CD14-positive monocyte (primary cell): ENCODE measurements at regions of chr2 and their contacts with region 1.

Region 1: DNA sequence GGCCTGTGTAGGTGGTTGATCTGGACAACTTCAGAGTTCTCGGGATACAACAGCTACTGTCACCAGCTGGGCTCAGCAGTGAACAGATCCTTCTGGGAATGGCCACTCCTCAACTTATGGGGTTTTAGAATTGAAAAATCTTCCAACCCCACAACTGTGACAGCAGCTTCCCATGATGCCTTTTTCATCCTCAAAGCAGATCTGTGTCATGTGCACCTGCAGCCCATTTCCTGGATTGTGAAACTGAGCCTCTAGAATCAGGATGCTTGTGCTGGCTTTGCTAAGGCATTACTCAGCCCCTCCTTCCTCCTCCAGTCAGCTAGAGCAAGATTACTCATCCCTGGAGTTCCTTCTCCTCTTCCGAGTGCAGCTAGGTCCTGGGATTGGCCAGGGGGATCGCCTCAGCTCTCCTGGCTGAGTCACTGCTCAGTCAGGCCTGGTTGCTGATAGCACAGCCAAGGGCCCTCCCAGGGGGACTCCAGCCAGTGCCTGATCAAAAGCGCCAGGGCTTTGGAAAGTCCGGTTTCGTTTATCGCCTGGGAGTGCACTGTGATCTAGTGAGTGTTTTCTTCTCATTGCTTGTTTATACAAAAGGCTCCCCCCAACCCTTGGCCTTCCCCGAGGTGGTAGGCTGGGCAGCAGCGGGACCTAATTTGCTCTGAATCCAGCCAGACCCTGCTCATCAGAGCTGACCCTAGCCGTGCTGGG is 2.4 kb upstream of the LPIN1 start:
- DNase-seq: peak; percentile 96 to 100 (median 99)
- H3K4me3 ChIP-seq: peak overlapping the region in 1 of 3 experiments; percentile 28
- H3K4me3 Mint-ChIP-seq: peak overlapping the region; percentile 54 to 68
- H3K27ac ChIP-seq: peak overlapping the region; percentile 16 to 70
- H3K27ac Mint-ChIP-seq: peak overlapping the region; percentile 81 to 93 (median 86)
- H3K4me1 ChIP-seq: peaks cover 50 to 59% of the 10 kb centered on the region in 2 donors
- H3K4me1 Mint-ChIP-seq: peaks cover 56% of the 10 kb centered on the region
- H3K27me3 ChIP-seq: no peaks in the 10 kb centered on the region
- H3K27me3 Mint-ChIP-seq: peaks cover 7 to 18% (median 15%) of the 10 kb centered on the region in 3 donors
- CTCF ChIP-seq: no peak

Region 2: DNA sequence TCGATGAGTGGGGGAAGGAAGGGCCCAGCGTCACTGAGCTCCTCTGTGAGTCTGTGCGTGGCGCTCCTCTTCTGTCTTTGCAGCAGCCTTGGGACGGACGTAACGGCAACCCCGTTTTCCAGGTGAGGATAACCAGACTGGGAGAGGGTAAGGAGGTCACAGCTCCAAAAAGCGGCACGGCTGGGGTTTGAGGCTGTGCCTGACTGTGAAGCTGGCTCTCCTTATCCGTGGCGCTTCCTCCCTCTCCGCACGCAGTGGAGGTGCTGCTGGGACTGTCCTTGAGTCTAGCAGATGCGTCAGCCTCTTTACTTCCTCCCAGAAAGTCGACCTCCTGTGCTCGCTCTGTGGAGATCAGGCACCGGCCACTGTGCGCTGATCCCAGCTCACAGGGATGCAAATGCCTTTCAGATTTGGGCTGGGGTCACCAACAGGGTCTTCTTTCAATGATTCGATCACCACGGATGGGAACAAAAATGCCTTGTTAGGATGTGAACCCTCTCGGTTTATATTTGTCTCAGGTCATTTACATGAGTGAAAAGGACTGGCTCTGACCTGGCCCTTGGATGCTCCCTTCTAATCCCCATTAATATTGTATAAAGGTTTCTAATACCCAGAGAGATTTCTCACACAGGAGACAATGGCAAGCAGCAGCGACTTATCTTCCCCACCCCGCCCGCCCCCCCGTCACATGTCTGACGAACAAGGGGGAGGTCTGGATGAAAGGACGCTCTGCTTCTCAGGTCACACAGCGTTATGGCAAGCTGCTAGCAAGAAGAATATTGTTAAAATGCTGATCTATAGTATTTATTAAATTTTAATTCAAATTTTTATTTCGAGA is 247.9 kb before region 1 on chr2:
- intact Hi-C with region 1: no loop called
- DNase-seq: peak in 1 of 3 donors; percentile 7
- H3K4me3 ChIP-seq: no peak overlapping the region
- H3K4me3 Mint-ChIP-seq: no peak overlapping the region
- H3K27ac ChIP-seq: no peak overlapping the region
- H3K27ac Mint-ChIP-seq: no peak overlapping the region
- H3K4me1 ChIP-seq: no peaks in the 10 kb centered on the region
- H3K4me1 Mint-ChIP-seq: peaks cover under 1% of the 10 kb centered on the region
- H3K27me3 ChIP-seq: peaks cover 0 to 18% of the 10 kb centered on the region in 2 donors
- H3K27me3 Mint-ChIP-seq: peaks cover 16 to 27% (median 19%) of the 10 kb centered on the region in 3 donors
- CTCF ChIP-seq: no peak

Region 3: GRCh38 chr2:11701751-11702301 is 42.2 kb before region 1 on chr2:
- intact Hi-C with region 1: loop called (anchors 2 to 5 kb)
- DNase-seq: peak; percentile 95 to 99 (median 97)
- H3K4me3 ChIP-seq: no peak overlapping the region
- H3K4me3 Mint-ChIP-seq: no peak overlapping the region
- H3K27ac ChIP-seq: peak overlapping the region; percentile 66 to 87
- H3K27ac Mint-ChIP-seq: no peak overlapping the region
- H3K4me1 ChIP-seq: peaks cover 33 to 34% of the 10 kb centered on the region in 2 donors
- H3K4me1 Mint-ChIP-seq: peaks cover 19% of the 10 kb centered on the region
- H3K27me3 ChIP-seq: no peaks in the 10 kb centered on the region
- H3K27me3 Mint-ChIP-seq: peaks cover 0 to 3% (median 3%) of the 10 kb centered on the region in 3 donors
- CTCF ChIP-seq: no peak

Region 4: DNA sequence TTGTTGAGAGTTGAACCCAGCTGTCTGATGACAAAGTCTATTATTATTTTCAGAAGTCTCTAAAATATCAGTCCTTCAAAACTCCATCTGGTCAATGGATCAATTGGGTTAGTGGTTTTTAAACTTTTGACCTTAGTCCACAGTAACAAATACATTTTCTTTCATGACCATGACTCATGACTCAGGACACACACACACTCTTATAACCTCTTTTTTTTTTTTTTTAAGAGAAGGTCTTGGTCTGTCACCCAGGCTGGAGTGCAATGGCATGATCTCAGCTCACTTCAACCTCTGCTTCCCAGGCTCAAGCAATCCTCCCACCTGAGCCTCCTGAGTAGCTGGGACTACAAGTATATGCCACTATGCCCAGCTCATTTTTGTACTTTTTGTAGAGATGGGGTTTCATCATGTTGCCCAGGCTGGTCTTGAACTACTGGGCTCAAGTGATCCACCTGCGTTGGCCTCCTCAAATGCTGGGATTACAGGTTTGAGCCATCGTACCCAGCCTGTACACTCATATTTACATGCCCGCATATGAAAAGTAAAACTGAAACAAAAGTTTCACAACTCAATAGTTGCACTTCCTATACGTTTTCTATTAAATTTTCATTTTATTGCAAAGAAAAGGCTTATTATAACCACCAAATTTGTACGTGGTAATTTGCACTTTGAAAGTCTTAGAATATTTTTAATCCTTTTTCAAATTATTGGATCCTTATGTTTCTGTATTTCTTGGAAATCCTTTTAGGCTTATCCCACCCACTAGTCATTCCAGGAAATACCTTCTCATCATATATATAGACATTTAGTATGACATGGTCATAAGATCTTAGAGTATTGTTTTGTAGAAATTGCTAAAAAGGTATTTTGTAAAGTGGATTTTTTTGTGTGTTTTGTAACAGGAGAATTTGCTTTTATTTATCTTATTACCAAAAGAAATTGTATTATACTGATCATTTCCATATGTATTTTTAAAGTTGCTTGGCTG is 201.4 kb after region 1 on chr2:
- intact Hi-C with region 1: loop called in 1 of 2 experiments (anchors 10 kb)
- DNase-seq: peak; percentile 33 to 66 (median 61)
- H3K4me3 ChIP-seq: peak overlapping the region in 2 of 3 experiments; percentile 16 to 58
- H3K4me3 Mint-ChIP-seq: peak overlapping the region; percentile 60 to 81
- H3K27ac ChIP-seq: peak overlapping the region; percentile 48 to 86
- H3K27ac Mint-ChIP-seq: peak overlapping the region; percentile 95 to 98 (median 97)
- H3K4me1 ChIP-seq: peaks cover 29 to 37% of the 10 kb centered on the region in 2 donors
- H3K4me1 Mint-ChIP-seq: peaks cover 56% of the 10 kb centered on the region
- H3K27me3 ChIP-seq: no peaks in the 10 kb centered on the region
- H3K27me3 Mint-ChIP-seq: peaks cover 0 to 2% (median 0%) of the 10 kb centered on the region in 3 donors
- CTCF ChIP-seq: no peak